ENCODE measurements at regions of chr10 and their contacts with region 1.

Region 1: GRCh38 chr10:61733358-61733940 is 70.7 kb downstream of the CABCOCO1 start:
- H3K4me3 ChIP-seq: no peak overlapping the region
- H3K27ac ChIP-seq: no peak overlapping the region
- H3K4me1 ChIP-seq: no peaks in the 10 kb centered on the region
- CTCF ChIP-seq: 0 out of 2 replicates have a peak, but pooled peaks have one; percentile 29

Region 2: DNA sequence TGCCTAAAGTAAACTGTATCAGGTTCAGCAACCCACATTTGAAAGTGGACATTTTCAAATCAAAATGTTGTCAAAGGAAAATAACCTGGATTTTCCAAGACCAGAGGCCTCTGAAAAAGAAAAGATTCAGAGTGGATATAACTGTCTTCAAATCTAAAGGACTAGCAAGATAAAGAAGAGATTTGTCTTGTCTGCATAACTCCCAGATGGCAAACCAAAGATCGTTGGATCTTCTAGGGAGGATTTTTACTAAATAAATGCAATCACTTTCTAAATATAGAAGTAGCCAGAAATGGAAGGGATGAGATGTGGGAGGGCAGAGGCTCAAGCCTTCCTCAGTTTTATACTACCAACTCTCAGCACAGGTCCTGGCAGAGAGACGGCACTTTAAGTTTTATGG is 31.7 kb before region 1 on chr10:
- CTCF ChIA-PET with region 1: no interaction called
- POLR2A ChIA-PET with region 1: no interaction called
- H3K4me3 ChIP-seq: no peak overlapping the region
- H3K27ac ChIP-seq: no peak overlapping the region
- H3K4me1 ChIP-seq: no peaks in the 10 kb centered on the region
- CTCF ChIP-seq: no peak

Region 3: DNA sequence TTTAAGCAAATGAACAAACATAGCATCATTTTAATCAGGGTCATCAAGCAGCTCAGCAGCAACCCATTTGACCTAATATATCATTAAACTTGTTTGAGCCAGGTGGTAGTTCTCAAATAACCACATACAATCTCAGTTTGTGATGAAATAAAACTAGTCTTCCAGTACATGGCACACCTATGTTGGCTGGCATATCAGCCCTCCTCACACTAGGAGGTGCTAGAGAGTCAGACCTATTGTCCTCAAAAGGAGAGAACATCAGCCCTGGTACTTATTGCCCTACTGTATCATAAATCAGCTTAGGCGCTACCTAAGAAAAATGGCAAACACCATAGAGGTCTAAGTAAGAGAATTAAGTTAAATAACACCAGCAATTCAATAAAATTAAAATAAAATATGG is 11.0 kb after region 1 on chr10:
- CTCF ChIA-PET with region 1: interaction called, 30 read pairs
- POLR2A ChIA-PET with region 1: no interaction called
- H3K4me3 ChIP-seq: no peak overlapping the region
- H3K27ac ChIP-seq: no peak overlapping the region
- H3K4me1 ChIP-seq: peaks cover 4% of the 10 kb centered on the region; the same call in 1 of the 2 replicates
- CTCF ChIP-seq: no peak

Region 4: DNA sequence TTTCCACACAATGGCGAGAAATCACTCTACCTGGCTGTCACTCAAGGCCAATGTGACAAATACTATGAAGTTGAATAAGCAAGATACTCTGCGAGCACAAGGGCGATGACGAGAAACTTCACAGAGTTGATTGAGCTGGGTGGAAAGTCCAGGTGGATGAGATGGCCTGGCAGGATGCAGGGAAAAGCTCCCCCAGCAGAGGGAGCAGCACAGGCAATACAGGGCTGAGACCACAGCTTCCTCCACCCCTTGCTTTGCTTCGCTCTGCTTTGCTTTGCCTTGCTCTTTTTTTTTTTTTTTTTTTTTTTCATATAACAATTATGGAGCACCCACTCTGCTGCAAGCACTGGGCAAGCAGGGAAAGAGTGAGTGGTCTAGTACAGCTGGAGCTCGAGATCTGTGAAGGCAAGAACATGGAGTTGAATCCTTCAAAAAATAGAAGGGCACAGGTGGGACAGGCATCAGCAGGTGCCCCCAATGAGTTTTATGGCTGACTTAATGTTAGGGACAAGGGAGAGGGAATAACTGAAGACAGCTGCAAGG is 17.6 kb after region 1 on chr10:
- CTCF ChIA-PET with region 1: interaction called, 30 read pairs
- POLR2A ChIA-PET with region 1: no interaction called
- H3K4me3 ChIP-seq: no peak overlapping the region
- H3K27ac ChIP-seq: no peak overlapping the region; the same call in 1 of the 2 replicates
- H3K4me1 ChIP-seq: peaks cover 22% of the 10 kb centered on the region
- CTCF ChIP-seq: peak; percentile 68; the same call in 1 of the 2 replicates

Measured in HEK293 (cell line).